Pancreas (tissue), 10 donors: ENCODE measurements at regions of chr11 and their contacts with region 1.

Region 1: DNA sequence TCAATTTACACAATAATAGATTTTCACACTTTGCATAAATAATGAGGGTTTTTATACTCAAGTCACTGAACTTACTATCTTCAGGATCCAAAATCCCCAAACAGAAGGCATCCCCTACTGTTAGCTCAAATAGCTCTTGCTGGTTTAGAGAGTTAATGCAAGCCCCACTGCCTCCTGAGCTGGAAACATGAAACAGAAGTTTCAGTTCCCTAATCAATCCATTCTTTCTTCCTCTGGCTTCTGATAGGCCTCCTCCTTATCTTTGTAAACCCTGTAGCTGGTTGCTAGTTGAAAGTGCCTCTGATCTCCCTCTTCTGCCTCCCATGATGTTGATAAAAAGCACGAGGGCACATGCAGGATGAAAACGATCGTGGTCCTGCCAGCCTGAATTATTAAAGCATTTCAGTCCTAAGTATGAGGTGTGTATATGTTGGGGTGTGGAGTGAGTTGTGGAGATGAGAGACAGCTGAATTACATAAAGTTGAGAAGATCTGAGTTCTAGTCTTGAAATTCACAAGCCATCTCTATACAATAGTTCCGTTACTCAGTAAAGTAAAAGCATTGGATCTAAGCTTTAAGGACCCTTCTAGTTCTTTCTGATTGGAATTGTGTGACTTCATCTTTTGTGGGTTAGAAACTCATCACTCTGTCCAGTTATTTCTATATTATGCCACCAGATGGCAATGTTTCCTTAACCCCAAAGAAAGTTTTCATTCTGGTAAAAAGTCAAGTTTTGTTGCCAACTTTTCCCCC is 35.0 kb upstream of the EHF start:
- DNase-seq: no peak
- ATAC-seq: peak; percentile 62 to 83 (median 75)
- H3K4me3 ChIP-seq: no peak overlapping the region
- H3K27ac ChIP-seq: peak overlapping the region in 2 of 4 donors; percentile 48 to 52
- H3K4me1 ChIP-seq: peaks cover 6 to 18% (median 7%) of the 10 kb centered on the region in 3 donors
- H3K27me3 ChIP-seq: no peaks in the 10 kb centered on the region
- CTCF ChIP-seq: peak; percentile 29 to 62 (median 52)

Region 2: DNA sequence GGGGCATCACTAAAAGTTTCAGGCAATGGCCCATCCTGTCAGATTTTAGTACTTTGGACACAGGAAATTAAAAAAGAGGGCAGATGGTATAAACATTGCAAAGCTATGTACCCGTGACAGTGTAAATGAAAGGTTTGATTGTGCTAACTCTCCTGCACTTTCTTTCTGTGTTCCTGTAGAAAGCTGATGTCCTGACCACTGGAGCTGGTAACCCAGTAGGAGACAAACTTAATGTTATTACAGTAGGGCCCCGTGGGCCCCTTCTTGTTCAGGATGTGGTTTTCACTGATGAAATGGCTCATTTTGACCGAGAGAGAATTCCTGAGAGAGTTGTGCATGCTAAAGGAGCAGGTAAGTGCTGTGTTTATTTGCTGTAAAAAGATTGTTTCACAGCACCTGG is 136.9 kb before region 1 on chr11:
- intact Hi-C with region 1: no loop called
- DNase-seq: no peak
- ATAC-seq: no peak
- H3K4me3 ChIP-seq: no peak overlapping the region
- H3K27ac ChIP-seq: no peak overlapping the region
- H3K4me1 ChIP-seq: peaks cover 0 to 6% (median 0%) of the 10 kb centered on the region in 3 donors
- H3K27me3 ChIP-seq: no peaks in the 10 kb centered on the region
- CTCF ChIP-seq: no peak

Region 3: GRCh38 chr11:34653826-34654490 is 68.0 kb after region 1 on chr11:
- intact Hi-C with region 1: loop called in 1 of 3 experiments (anchors 5 kb)
- DNase-seq: peak in 5 of 6 donors; percentile 62 to 81 (median 72)
- ATAC-seq: peak; percentile 84 to 90 (median 88)
- H3K4me3 ChIP-seq: no peak overlapping the region
- H3K27ac ChIP-seq: peak overlapping the region; percentile 32 to 77 (median 68)
- H3K4me1 ChIP-seq: peaks cover 13 to 23% (median 17%) of the 10 kb centered on the region in 3 donors
- H3K27me3 ChIP-seq: no peaks in the 10 kb centered on the region
- CTCF ChIP-seq: no peak

Region 4: GRCh38 chr11:34890812-34891211 is 304.9 kb after region 1 on chr11:
- intact Hi-C with region 1: loop called in 2 of 3 experiments (anchors 5 to 10 kb)
- DNase-seq: no peak
- ATAC-seq: peak in 3 of 4 donors; percentile 80 to 84 (median 82)
- H3K4me3 ChIP-seq: no peak overlapping the region
- H3K27ac ChIP-seq: no peak overlapping the region
- H3K4me1 ChIP-seq: peaks cover 7 to 16% (median 10%) of the 10 kb centered on the region in 3 donors
- H3K27me3 ChIP-seq: no peaks in the 10 kb centered on the region
- CTCF ChIP-seq: peak in 3 of 4 donors; percentile 15 to 29 (median 28)

Region 5: GRCh38 chr11:34899633-34900016 is 313.7 kb after region 1 on chr11:
- intact Hi-C with region 1: loop called in 2 of 3 experiments (anchors 5 to 10 kb)
- DNase-seq: no peak
- ATAC-seq: no peak
- H3K4me3 ChIP-seq: no peak overlapping the region
- H3K27ac ChIP-seq: no peak overlapping the region
- H3K4me1 ChIP-seq: peaks cover 0 to 3% (median 0%) of the 10 kb centered on the region in 3 donors
- H3K27me3 ChIP-seq: no peaks in the 10 kb centered on the region
- CTCF ChIP-seq: no peak